ENCODE measurements at regions of chr12 and their contacts with region 1.

Region 1: GRCh38 chr12:121668750-121669520 is 519 bp downstream of the MORN3 start:
- DNase-seq: peak; percentile 68
- ATAC-seq: no peak
- H3K4me3 Mint-ChIP-seq: no peak overlapping the region
- H3K27ac Mint-ChIP-seq: no peak overlapping the region
- H3K4me1 Mint-ChIP-seq: peaks cover 51% of the 10 kb centered on the region
- H3K27me3 Mint-ChIP-seq: no peaks in the 10 kb centered on the region

Region 2: GRCh38 chr12:121530600-121531355 is 138.2 kb before region 1 on chr12:
- CTCF ChIA-PET with region 1: no interaction called
- DNase-seq: peak; percentile 89
- ATAC-seq: peak; percentile 91
- H3K4me3 Mint-ChIP-seq: peak overlapping the region; percentile 6
- H3K27ac Mint-ChIP-seq: peak overlapping the region; percentile 88
- H3K4me1 Mint-ChIP-seq: peaks cover 45% of the 10 kb centered on the region
- H3K27me3 Mint-ChIP-seq: no peaks in the 10 kb centered on the region

Region 3: DNA sequence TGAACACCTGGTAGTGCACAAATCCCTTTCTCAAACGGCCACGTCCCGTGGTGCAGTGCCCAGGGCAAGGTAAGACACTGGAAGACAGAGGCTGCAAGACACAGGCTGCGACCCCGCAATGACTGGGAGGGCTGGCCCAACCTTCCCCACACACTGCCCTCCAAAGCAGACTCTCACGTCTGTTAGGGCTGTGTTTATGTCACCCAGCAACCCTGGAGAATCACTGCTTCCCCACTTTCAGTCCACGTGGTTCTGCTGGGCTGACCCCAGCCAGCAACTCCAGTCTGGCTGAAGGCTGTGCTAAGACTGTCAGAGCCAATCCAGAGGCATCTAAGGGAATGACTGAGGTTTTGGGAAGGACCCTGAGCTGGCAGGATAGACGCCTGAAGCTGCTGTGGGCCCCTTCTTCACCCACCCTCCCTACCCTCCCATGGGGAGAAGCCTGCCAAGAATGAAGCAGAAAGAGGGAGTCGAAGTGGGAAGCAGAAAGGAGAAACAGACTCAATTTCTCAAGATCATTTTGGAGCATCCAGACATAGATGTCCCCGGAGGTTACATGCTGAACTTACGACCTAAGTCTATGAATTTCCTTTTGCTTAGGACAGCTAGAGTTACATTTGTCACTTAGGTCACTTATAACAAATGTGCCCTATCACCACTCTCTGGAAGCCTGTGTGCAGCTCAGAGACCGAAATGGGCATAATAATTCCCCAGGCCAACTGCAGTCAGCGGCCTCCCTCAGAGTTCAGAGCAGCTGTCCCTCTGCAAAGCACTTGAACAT is 99.8 kb before region 1 on chr12:
- CTCF ChIA-PET with region 1: no interaction called
- DNase-seq: no peak
- ATAC-seq: no peak
- H3K4me3 Mint-ChIP-seq: no peak overlapping the region
- H3K27ac Mint-ChIP-seq: no peak overlapping the region
- H3K4me1 Mint-ChIP-seq: peaks cover 3% of the 10 kb centered on the region
- H3K27me3 Mint-ChIP-seq: no peaks in the 10 kb centered on the region

Region 4: GRCh38 chr12:121637231-121637914 is 31.6 kb before region 1 on chr12:
- CTCF ChIA-PET with region 1: interaction called, 19 read pairs
- DNase-seq: peak; percentile 87
- ATAC-seq: peak; percentile 85
- H3K4me3 Mint-ChIP-seq: peak overlapping the region; percentile 44
- H3K27ac Mint-ChIP-seq: peak overlapping the region; percentile 90
- H3K4me1 Mint-ChIP-seq: peaks cover 45% of the 10 kb centered on the region
- H3K27me3 Mint-ChIP-seq: no peaks in the 10 kb centered on the region

Region 5: GRCh38 chr12:121657305-121658008 is 11.5 kb before region 1 on chr12:
- CTCF ChIA-PET with region 1: interaction called, 47 read pairs
- DNase-seq: peak; percentile 61
- ATAC-seq: no peak
- H3K4me3 Mint-ChIP-seq: no peak overlapping the region
- H3K27ac Mint-ChIP-seq: peak overlapping the region; percentile 69
- H3K4me1 Mint-ChIP-seq: peaks cover 64% of the 10 kb centered on the region
- H3K27me3 Mint-ChIP-seq: no peaks in the 10 kb centered on the region

Measured in activated CD8-positive, alpha-beta memory T cell treated with anti-CD3 and anti-CD28 coated beads, Interleukin-2, amount 10 ng/mL, durations not matched to agents 7 days and 5 days (primary cell).